Heart right ventricle (tissue), 16 donors: ENCODE measurements at regions of chr15 and their contacts with region 1.

Region 1: GRCh38 chr15:29925227-29926082 is 103.2 kb upstream of the TJP1 start:
- DNase-seq: peak; percentile 81 to 85
- ATAC-seq: peak; percentile 90 to 98 (median 95)
- H3K4me3 ChIP-seq: no peak overlapping the region
- H3K27ac ChIP-seq: peak overlapping the region in 6 of 10 donors; percentile 3 to 66 (median 30)
- H3K4me1 ChIP-seq: peaks cover 8 to 25% (median 17%) of the 10 kb centered on the region in 9 donors
- H3K27me3 ChIP-seq: no peaks in the 10 kb centered on the region
- CTCF ChIP-seq: peak; percentile 82 to 98 (median 90)

Region 2: GRCh38 chr15:29668120-29668602 is 257.3 kb before region 1 on chr15:
- intact Hi-C with region 1: loop called in 3 of 10 experiments (anchors 1 to 5 kb)
- DNase-seq: peak; percentile 48 to 74
- ATAC-seq: peak; percentile 73 to 95 (median 92)
- H3K4me3 ChIP-seq: no peak overlapping the region
- H3K27ac ChIP-seq: no peak overlapping the region
- H3K4me1 ChIP-seq: peaks cover 0 to 7% (median 0%) of the 10 kb centered on the region in 9 donors
- H3K27me3 ChIP-seq: peaks cover 0 to 18% (median 0%) of the 10 kb centered on the region in 7 donors
- CTCF ChIP-seq: peak; percentile 68 to 90 (median 78)

Region 3: DNA sequence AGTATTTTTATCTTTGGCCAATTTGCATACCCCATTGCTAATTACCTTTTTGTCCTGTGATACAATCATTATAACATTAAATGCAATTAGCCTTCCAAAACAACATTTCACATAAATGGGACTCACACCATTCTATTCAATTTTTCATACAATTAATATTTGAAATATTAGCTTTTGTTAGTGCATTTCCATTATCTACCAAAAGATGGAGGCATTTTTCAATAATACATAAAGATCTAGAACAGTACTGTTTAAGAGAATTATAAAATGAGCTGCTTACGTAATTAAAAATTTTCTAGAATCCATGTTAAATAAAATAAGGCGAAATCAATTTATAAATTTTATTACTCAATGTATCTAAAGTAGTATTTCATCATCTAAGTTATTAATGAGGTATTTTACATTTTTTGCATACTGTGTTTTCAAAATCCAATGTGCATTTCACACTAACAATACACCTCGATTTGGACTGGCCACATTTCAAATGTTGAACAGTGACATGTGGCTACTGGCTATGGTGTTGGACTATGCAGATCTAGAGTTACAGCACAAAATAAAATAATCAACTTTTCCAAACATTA is 177.5 kb before region 1 on chr15:
- intact Hi-C with region 1: loop called in 9 of 10 experiments (anchors 1 to 10 kb)
- DNase-seq: no peak
- ATAC-seq: no peak
- H3K4me3 ChIP-seq: no peak overlapping the region
- H3K27ac ChIP-seq: no peak overlapping the region
- H3K4me1 ChIP-seq: peaks cover 0 to 33% (median 12%) of the 10 kb centered on the region in 9 donors
- H3K27me3 ChIP-seq: no peaks in the 10 kb centered on the region
- CTCF ChIP-seq: peak; percentile 19 to 72 (median 49)

Region 4: GRCh38 chr15:29821416-29822131 is 103.9 kb before region 1 on chr15:
- intact Hi-C with region 1: loop called in 6 of 10 experiments (anchors 5 kb)
- DNase-seq: peak; percentile 69 to 83
- ATAC-seq: peak; percentile 39 to 86 (median 72)
- H3K4me3 ChIP-seq: peak overlapping the region; percentile 56 to 91 (median 76)
- H3K27ac ChIP-seq: peak overlapping the region; percentile 92 to 99 (median 98)
- H3K4me1 ChIP-seq: peaks cover 4 to 63% (median 28%) of the 10 kb centered on the region in 9 donors
- H3K27me3 ChIP-seq: peaks cover 0 to 73% (median 0%) of the 10 kb centered on the region in 7 donors
- CTCF ChIP-seq: peak in 8 of 9 donors; percentile 9 to 54 (median 28)

Region 5: DNA sequence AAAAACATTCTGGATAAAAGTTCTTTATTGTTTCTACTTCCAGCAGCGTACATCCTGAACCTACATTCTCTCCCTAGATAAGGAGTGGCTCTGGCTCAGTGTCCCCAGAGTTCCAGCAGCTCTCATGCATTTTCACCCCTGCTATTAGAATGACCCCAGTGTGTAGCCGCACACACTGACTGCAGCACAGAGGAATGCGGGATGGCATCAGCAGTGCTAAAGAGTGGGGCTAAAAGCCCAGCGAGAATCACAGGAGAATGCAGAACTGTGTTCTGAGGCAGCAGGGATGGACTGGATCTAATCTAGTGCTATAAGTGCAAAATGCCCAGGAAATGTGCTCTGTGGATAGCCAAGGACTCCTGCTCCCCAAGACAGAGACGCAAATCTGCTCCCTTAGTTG is 36.8 kb before region 1 on chr15:
- intact Hi-C with region 1: loop called in 1 of 10 experiments (anchors 5 kb)
- DNase-seq: peak in 1 of 2 donors; percentile 39
- ATAC-seq: peak; percentile 83 to 96 (median 88)
- H3K4me3 ChIP-seq: no peak overlapping the region
- H3K27ac ChIP-seq: peak overlapping the region in 8 of 10 donors; percentile 8 to 63 (median 59)
- H3K4me1 ChIP-seq: peaks cover 6 to 59% (median 40%) of the 10 kb centered on the region in 9 donors
- H3K27me3 ChIP-seq: no peaks in the 10 kb centered on the region
- CTCF ChIP-seq: no peak

Region 6: GRCh38 chr15:31609243-31609642 is 1683.8 kb after region 1 on chr15:
- intact Hi-C with region 1: no loop called
- DNase-seq: no peak
- ATAC-seq: no peak
- H3K4me3 ChIP-seq: no peak overlapping the region
- H3K27ac ChIP-seq: no peak overlapping the region
- H3K4me1 ChIP-seq: peaks cover 0 to 5% (median 0%) of the 10 kb centered on the region in 9 donors
- H3K27me3 ChIP-seq: no peaks in the 10 kb centered on the region
- CTCF ChIP-seq: no peak